BJ (cell line): ENCODE measurements at regions of chr9 and their contacts with region 1.

Region 1: DNA sequence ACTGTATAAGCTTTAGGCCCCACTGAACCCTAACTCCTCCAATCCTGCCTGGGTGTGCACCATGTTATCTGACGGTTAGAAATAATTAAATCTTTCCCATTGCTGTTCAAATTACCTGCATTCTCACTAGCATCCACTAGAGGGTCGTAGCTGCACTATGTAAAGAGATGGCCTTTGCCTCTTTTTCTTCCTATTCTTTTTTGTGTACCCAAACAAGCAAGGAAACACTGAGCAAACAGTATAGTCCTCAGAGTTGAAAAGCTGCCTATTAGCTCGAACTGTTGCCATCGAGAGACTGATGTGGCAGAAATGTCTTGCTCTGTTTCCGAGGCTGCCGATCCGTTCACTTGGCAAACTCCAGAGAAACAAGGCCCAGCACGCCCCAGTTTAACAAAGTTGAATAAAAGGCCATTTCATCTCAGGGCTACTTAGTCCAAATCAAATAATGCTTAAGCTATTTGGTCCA is 163.8 kb upstream of the TRPM3 start:
- DNase-seq: no peak
- H3K4me3 ChIP-seq: no peak overlapping the region
- H3K27me3 ChIP-seq: peaks cover 3% of the 10 kb centered on the region; the same call in 1 of the 2 replicates
- CTCF ChIP-seq: peak; percentile 84

Region 2: GRCh38 chr9:71302776-71303175 is 17.6 kb after region 1 on chr9:
- CTCF ChIA-PET with region 1: interaction called, 11 read pairs
- POLR2A ChIA-PET with region 1: no interaction called
- DNase-seq: no peak
- H3K4me3 ChIP-seq: no peak overlapping the region
- H3K27me3 ChIP-seq: no peaks in the 10 kb centered on the region
- CTCF ChIP-seq: no peak

Region 3: GRCh38 chr9:71361357-71361756 is 76.1 kb after region 1 on chr9:
- CTCF ChIA-PET with region 1: interaction called, 11 read pairs
- POLR2A ChIA-PET with region 1: no interaction called
- DNase-seq: no peak
- H3K4me3 ChIP-seq: no peak overlapping the region
- H3K27me3 ChIP-seq: no peaks in the 10 kb centered on the region
- CTCF ChIP-seq: no peak

Region 4: DNA sequence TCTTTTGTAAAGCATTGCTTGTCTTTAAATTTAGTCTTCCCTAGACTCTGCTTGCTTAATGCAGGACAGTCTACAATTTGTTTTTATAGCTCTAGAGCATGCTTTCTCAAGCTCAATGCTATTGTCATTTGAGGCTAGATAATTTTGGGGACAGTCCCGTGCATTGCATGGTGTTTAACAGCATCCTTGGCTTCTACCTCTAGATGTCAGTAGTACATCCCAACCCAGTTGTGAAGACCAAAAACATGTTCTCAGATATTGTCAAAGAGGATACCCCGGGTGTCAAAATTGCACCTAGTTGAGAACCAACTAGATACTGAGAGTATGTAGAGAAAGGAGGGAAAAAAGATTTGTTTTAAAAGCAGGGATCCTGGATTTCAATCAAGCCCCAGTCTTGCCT is 205.6 kb after region 1 on chr9:
- CTCF ChIA-PET with region 1: interaction called, 13 read pairs
- POLR2A ChIA-PET with region 1: no interaction called
- DNase-seq: no peak
- H3K4me3 ChIP-seq: no peak overlapping the region
- H3K27me3 ChIP-seq: 0 out of 2 replicates have a peak, but pooled peaks cover 2% of the 10 kb centered on the region
- CTCF ChIP-seq: peak; percentile 31; the same call in 1 of the 2 replicates